ENCODE measurements at regions of chr16 and their contacts with region 1.

Region 1: GRCh38 chr16:84617791-84618580 is at the start of gene COTL1:
- DNase-seq: peak; percentile 96
- H3K4me3 Mint-ChIP-seq: peak within 1 kb of the TSS; percentile 93
- H3K27ac Mint-ChIP-seq: peak within 1 kb of the TSS; percentile 86
- H3K4me1 Mint-ChIP-seq: peaks cover 40% of the 10 kb centered on the region
- H3K27me3 Mint-ChIP-seq: no peaks in the 10 kb centered on the region
- total RNA-seq, gene COTL1: 358 to 364 TPM

Region 2: DNA sequence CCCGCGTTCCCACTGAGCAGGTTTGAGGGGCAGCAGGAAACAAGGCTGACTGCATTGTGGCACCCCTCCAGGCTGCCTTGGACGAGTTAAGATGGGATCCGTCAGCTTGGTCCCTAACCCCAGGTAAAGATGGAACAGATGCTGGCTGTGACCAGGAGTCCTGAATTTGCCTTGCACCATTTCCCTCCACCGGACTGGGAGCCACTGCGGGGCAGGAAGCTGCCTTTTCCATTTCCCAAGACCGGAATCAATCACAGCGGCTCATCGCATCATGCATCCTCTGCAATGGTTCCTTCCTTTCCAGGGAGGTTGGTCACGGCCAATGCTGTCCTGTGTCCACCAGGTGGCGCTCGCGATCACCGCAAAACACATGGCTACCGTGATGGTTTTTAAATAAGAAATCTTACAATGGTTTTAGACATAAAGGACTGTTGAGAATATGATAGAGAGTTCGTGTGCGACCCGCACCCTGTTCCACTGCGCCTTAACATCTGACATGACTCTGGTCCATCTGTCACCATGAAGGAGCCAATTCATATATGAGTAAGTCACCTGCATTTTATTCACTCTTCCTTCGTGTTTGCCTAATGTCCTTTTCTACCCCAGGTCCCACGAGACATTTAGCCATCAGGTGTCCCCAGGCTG is 106.7 kb before region 1 on chr16:
- CTCF ChIA-PET with region 1: interaction called, 247 read pairs
- POLR2A ChIA-PET with region 1: interaction called, 15 read pairs
- intact Hi-C with region 1: loop called (anchors 1 kb)
- DNase-seq: peak; percentile 82
- H3K4me3 Mint-ChIP-seq: no peak overlapping the region
- H3K27ac Mint-ChIP-seq: peak overlapping the region; percentile 44
- H3K4me1 Mint-ChIP-seq: peaks cover 67% of the 10 kb centered on the region
- H3K27me3 Mint-ChIP-seq: no peaks in the 10 kb centered on the region

Region 3: GRCh38 chr16:84555418-84556195 is 62.4 kb before region 1 on chr16:
- CTCF ChIA-PET with region 1: interaction called, 13 read pairs
- POLR2A ChIA-PET with region 1: interaction called, 7 read pairs
- intact Hi-C with region 1: loop called (anchors 1 kb)
- DNase-seq: no peak
- H3K4me3 Mint-ChIP-seq: no peak overlapping the region
- H3K27ac Mint-ChIP-seq: peak overlapping the region; percentile 10
- H3K4me1 Mint-ChIP-seq: peaks cover 38% of the 10 kb centered on the region
- H3K27me3 Mint-ChIP-seq: no peaks in the 10 kb centered on the region

Region 4: GRCh38 chr16:84599521-84600202 is 18.3 kb before region 1 on chr16:
- CTCF ChIA-PET with region 1: interaction called, 35 read pairs
- POLR2A ChIA-PET with region 1: interaction called, 54 read pairs
- intact Hi-C with region 1: loop called (anchors 1 kb)
- DNase-seq: peak; percentile 90
- H3K4me3 Mint-ChIP-seq: peak overlapping the region; percentile 72
- H3K27ac Mint-ChIP-seq: peak overlapping the region; percentile 96
- H3K4me1 Mint-ChIP-seq: peaks cover 88% of the 10 kb centered on the region
- H3K27me3 Mint-ChIP-seq: no peaks in the 10 kb centered on the region

Region 5: GRCh38 chr16:84647828-84648594 is 30.0 kb after region 1 on chr16 and contains the start of gene KLHL36:
- CTCF ChIA-PET with region 1: interaction called, 15 read pairs
- POLR2A ChIA-PET with region 1: interaction called, 3 read pairs
- intact Hi-C with region 1: no loop called
- DNase-seq: peak; percentile 78
- H3K4me3 Mint-ChIP-seq: peak within 1 kb of the TSS; percentile 79
- H3K27ac Mint-ChIP-seq: peak within 1 kb of the TSS; percentile 64
- H3K4me1 Mint-ChIP-seq: peaks cover 42% of the 10 kb centered on the region
- H3K27me3 Mint-ChIP-seq: peaks cover 2% of the 10 kb centered on the region
- total RNA-seq, gene KLHL36: 56.1 to 56.8 TPM

Region 6: GRCh38 chr16:84712138-84712671 is 94.2 kb after region 1 on chr16:
- CTCF ChIA-PET with region 1: no interaction called
- POLR2A ChIA-PET with region 1: no interaction called
- intact Hi-C with region 1: no loop called
- DNase-seq: no peak
- H3K4me3 Mint-ChIP-seq: no peak overlapping the region
- H3K27ac Mint-ChIP-seq: no peak overlapping the region
- H3K4me1 Mint-ChIP-seq: peaks cover 76% of the 10 kb centered on the region
- H3K27me3 Mint-ChIP-seq: no peaks in the 10 kb centered on the region

Region 7: DNA sequence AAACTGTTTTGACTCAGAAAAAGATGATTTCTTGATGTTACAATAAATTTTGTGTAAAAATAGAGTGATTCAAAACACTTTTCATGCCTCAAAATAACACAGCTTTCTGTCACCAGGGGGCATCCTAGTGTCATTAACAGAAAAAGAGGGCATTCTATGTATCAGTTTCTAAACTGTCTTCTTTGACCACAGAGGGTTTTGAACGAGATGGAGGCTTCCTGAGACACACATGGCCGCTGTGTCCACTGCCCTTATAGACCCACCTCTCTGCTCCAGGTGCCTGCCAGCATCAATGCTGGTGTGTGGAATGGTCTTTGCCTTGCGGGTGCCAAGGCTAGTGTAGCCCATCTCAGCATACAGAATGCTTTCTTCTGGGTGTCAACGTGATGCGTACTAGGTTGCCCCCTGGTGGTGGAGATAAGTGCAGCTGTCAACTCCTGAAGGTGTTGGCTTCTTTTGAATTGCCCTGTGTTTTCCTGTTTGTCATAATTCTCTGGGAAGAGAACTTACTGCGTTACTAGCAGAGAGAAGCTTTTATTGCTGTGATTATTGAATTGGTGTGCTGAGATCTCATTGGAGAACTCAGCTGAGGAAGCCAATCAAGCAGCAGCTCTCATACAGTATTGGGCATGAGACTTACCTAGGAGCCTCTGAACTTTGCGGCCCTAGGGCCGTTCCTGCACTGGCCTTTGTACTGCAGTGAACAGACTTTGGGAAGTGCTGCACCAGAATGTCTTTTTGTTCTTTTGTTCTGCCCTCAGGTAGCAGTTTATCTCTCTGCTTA is 120.5 kb after region 1 on chr16:
- CTCF ChIA-PET with region 1: interaction called, 37 read pairs
- POLR2A ChIA-PET with region 1: no interaction called
- intact Hi-C with region 1: loop called (anchors 1 kb)
- DNase-seq: peak; percentile 82
- H3K4me3 Mint-ChIP-seq: peak overlapping the region; percentile 6
- H3K27ac Mint-ChIP-seq: peak overlapping the region; percentile 63
- H3K4me1 Mint-ChIP-seq: peaks cover 48% of the 10 kb centered on the region
- H3K27me3 Mint-ChIP-seq: no peaks in the 10 kb centered on the region

Region 8: DNA sequence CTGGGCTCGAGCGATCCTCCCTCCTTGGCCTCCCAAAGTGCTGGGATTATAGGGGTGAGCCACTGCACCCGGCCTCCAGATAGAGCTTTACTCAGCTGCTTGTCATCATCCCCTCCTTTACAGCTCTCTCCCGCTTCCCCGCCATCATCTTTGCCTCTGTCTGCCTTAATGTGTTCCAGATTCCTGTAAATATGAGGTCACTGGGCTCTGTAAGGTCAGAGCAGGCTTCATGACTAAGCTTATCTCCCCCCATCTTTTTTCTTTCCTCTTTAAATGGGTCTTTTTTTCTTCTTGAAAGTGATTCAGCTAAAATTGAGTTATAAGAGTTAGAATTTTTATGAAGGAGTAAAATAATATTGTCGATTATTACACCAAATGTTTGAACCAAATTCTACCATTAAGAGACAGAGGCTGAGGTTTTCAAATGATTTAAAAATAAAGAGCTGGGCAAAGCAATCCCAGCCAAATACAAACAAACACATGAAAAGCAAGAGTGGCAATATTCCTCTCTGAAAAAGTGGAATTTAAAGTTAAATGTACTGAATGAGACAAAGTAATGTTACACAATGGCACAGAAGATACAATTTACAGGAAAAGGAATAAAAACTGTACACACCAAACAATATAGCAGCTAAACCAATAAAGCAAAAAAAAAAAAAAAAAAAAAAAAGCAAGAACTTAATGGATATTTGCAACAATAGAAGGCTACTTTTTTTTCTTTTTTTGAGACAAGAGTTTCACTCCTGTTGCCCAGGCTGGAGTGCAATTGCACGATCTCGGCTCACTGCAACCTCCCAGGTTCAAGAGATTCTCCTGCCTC is 263.9 kb after region 1 on chr16:
- CTCF ChIA-PET with region 1: no interaction called
- POLR2A ChIA-PET with region 1: no interaction called
- intact Hi-C with region 1: no loop called
- DNase-seq: no peak
- H3K4me3 Mint-ChIP-seq: no peak overlapping the region
- H3K27ac Mint-ChIP-seq: no peak overlapping the region
- H3K4me1 Mint-ChIP-seq: peaks cover 2% of the 10 kb centered on the region
- H3K27me3 Mint-ChIP-seq: no peaks in the 10 kb centered on the region

Region 9: GRCh38 chr16:84970447-84971127 is 352.6 kb after region 1 on chr16:
- CTCF ChIA-PET with region 1: interaction called, 10 read pairs
- POLR2A ChIA-PET with region 1: no interaction called
- intact Hi-C with region 1: loop called (anchors 1 kb)
- DNase-seq: peak; percentile 85
- H3K4me3 Mint-ChIP-seq: no peak overlapping the region
- H3K27ac Mint-ChIP-seq: no peak overlapping the region
- H3K4me1 Mint-ChIP-seq: no peaks in the 10 kb centered on the region
- H3K27me3 Mint-ChIP-seq: no peaks in the 10 kb centered on the region